ENCODE measurements at regions of chr17 and their contacts with region 1.

Region 1: GRCh38 chr17:75814900-75815373 is 29.3 kb downstream of the UNC13D start:
- DNase-seq: peak; percentile 39
- H3K4me3 ChIP-seq: no peak overlapping the region
- H3K27ac ChIP-seq: peak overlapping the region; percentile 75
- H3K27me3 ChIP-seq: no peaks in the 10 kb centered on the region
- CTCF ChIP-seq: no peak

Region 2: DNA sequence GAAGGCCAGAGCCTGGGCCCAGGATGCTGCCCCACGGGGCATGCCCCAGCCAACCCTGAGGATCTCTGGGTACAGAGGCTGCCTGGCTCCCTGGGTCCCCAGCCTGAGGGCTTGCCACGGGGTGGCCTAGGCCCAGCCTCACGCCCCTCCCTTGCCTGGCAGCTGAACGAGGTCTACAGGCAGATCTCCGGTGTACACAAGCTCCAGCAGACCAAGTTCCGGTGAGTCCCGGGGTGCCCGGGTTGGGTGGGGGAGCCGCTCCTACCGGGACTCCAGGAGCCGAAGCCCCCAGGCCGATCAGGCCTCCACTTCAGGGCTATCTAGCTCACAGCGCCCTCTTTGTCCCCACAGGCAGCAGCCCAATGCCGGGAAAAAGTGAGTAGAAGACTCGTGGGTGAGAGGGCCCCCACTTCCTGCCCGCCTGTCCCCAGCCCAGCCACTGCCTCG is 74.3 kb before region 1 on chr17:
- CTCF ChIA-PET with region 1: no interaction called
- POLR2A ChIA-PET with region 1: no interaction called
- DNase-seq: no peak
- H3K4me3 ChIP-seq: no peak overlapping the region
- H3K27ac ChIP-seq: no peak overlapping the region
- H3K27me3 ChIP-seq: peaks cover 8% of the 10 kb centered on the region
- CTCF ChIP-seq: no peak

Region 3: GRCh38 chr17:75827252-75828115 is 12.5 kb after region 1 on chr17:
- CTCF ChIA-PET with region 1: interaction called, 12 read pairs
- POLR2A ChIA-PET with region 1: interaction called, 4 read pairs
- DNase-seq: no peak
- H3K4me3 ChIP-seq: peak overlapping the region; percentile 32
- H3K27ac ChIP-seq: peak overlapping the region; percentile 11
- H3K27me3 ChIP-seq: no peaks in the 10 kb centered on the region
- CTCF ChIP-seq: peak; percentile 77

Measured in AG04450 (cell line).